ENCODE measurements at regions of chr15 and their contacts with region 1.

Region 1: DNA sequence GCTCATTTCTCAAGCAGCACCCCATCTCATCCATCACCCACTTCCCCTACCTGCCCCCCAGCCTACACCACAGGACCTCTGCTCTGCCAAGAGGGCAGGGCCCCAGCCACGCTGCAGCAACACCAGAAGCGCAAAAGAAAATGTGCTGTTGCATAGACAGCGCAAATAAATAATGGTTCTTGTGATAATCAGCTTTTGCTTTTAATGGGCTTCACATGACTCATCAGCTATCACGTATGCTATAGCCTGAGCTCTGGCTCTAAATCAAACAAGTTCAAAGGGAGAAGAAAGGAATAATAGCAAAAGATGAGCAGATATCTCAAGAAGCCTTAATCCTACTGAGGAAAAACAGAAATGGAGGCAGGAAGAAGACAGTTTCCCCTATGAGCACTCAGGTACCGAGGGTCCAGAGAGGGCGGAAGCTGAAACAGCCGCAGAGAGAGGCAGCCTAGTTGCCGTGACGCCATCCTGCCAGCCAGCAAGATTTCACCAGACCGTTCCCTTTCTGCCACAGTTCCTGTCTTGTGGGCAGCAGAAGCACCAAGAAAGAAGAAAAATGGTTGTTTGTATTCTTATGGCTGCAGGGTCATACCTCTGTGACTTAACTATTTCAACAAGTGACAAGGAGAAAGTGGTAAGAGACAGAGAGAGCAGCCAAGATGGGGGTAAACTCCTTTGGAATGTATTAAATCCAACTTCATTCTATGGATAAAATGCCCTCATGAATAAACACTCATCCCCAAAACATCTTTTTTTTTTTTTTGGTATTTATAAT is 22.0 kb downstream of the RAB27A start:
- DNase-seq: peak; percentile 77 to 89 (median 81)
- H3K4me3 ChIP-seq: peak overlapping the region in 1 of 2 donors; percentile 30
- H3K4me3 Mint-ChIP-seq: peak overlapping the region; percentile 69 to 85 (median 79)
- H3K27ac ChIP-seq: peak overlapping the region; percentile 69
- H3K27ac Mint-ChIP-seq: peak overlapping the region; percentile 90 to 98 (median 97)
- H3K4me1 ChIP-seq: peaks cover 69% of the 10 kb centered on the region
- H3K4me1 Mint-ChIP-seq: peaks cover 46 to 80% (median 62%) of the 10 kb centered on the region in 4 donors
- H3K27me3 ChIP-seq: no peaks in the 10 kb centered on the region
- H3K27me3 Mint-ChIP-seq: no peaks in the 10 kb centered on the region

Region 2: DNA sequence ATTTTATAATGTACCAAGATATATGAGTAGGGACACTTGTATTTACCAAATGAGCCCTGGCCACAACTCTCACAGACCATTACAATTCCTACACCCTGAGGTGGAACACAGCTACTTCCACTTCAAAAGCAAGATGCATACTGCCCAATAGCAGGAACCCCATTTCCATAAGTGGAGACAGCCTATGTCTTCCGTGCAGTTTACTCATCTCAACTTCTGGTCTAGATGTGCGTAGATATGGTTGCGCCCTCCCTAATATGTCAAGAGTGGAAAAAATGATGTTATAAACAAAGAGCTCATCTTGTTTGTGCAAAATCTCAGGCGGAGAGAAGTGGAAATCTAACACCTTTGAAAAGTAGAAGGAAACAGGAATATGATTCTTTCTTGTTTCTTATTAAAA is 22.5 kb before region 1 on chr15:
- CTCF ChIA-PET with region 1: no interaction called
- POLR2A ChIA-PET with region 1: interaction called, 47 read pairs
- intact Hi-C with region 1: no loop called
- DNase-seq: no peak
- H3K4me3 ChIP-seq: no peak overlapping the region
- H3K4me3 Mint-ChIP-seq: peak overlapping the region in 1 of 8 donors; percentile 13
- H3K27ac ChIP-seq: no peak overlapping the region
- H3K27ac Mint-ChIP-seq: peak overlapping the region in 3 of 7 donors; percentile 30 to 47 (median 38)
- H3K4me1 ChIP-seq: peaks cover 38% of the 10 kb centered on the region
- H3K4me1 Mint-ChIP-seq: peaks cover 34 to 72% (median 46%) of the 10 kb centered on the region in 4 donors
- H3K27me3 ChIP-seq: no peaks in the 10 kb centered on the region
- H3K27me3 Mint-ChIP-seq: no peaks in the 10 kb centered on the region

Region 3: GRCh38 chr15:55255714-55256113 is 11.9 kb before region 1 on chr15:
- CTCF ChIA-PET with region 1: interaction called, 11 read pairs
- POLR2A ChIA-PET with region 1: interaction called, 47 read pairs
- intact Hi-C with region 1: loop called (anchors 1 kb)
- DNase-seq: peak in 3 of 5 donors; percentile 24 to 30 (median 26)
- H3K4me3 ChIP-seq: peak overlapping the region; percentile 8 to 32
- H3K4me3 Mint-ChIP-seq: peak overlapping the region; percentile 80 to 93 (median 83)
- H3K27ac ChIP-seq: peak overlapping the region; percentile 64
- H3K27ac Mint-ChIP-seq: peak overlapping the region; percentile 80 to 97 (median 93)
- H3K4me1 ChIP-seq: peaks cover 66% of the 10 kb centered on the region
- H3K4me1 Mint-ChIP-seq: peaks cover 52 to 78% (median 66%) of the 10 kb centered on the region in 4 donors
- H3K27me3 ChIP-seq: no peaks in the 10 kb centered on the region
- H3K27me3 Mint-ChIP-seq: no peaks in the 10 kb centered on the region

Region 4: GRCh38 chr15:55290528-55291057 is 23.0 kb after region 1 on chr15:
- CTCF ChIA-PET with region 1: interaction called, 14 read pairs
- POLR2A ChIA-PET with region 1: interaction called, 201 read pairs
- intact Hi-C with region 1: loop called (anchors 1 kb)
- DNase-seq: peak; percentile 80 to 84 (median 82)
- H3K4me3 ChIP-seq: peak overlapping the region; percentile 66 to 85
- H3K4me3 Mint-ChIP-seq: peak overlapping the region; percentile 88 to 96 (median 93)
- H3K27ac ChIP-seq: peak overlapping the region; percentile 96
- H3K27ac Mint-ChIP-seq: peak overlapping the region; percentile 87 to 96 (median 95)
- H3K4me1 ChIP-seq: peaks cover 36% of the 10 kb centered on the region
- H3K4me1 Mint-ChIP-seq: peaks cover 26 to 49% (median 31%) of the 10 kb centered on the region in 4 donors
- H3K27me3 ChIP-seq: no peaks in the 10 kb centered on the region
- H3K27me3 Mint-ChIP-seq: no peaks in the 10 kb centered on the region

Region 5: GRCh38 chr15:55434989-55435825 is 167.6 kb after region 1 on chr15:
- CTCF ChIA-PET with region 1: interaction called, 10 read pairs
- POLR2A ChIA-PET with region 1: no interaction called
- intact Hi-C with region 1: no loop called
- DNase-seq: peak in 4 of 5 donors; percentile 23 to 36 (median 30)
- H3K4me3 ChIP-seq: no peak overlapping the region
- H3K4me3 Mint-ChIP-seq: no peak overlapping the region
- H3K27ac ChIP-seq: no peak overlapping the region
- H3K27ac Mint-ChIP-seq: no peak overlapping the region
- H3K4me1 ChIP-seq: peaks cover 4% of the 10 kb centered on the region
- H3K4me1 Mint-ChIP-seq: peaks cover 3 to 7% (median 5%) of the 10 kb centered on the region in 4 donors
- H3K27me3 ChIP-seq: no peaks in the 10 kb centered on the region
- H3K27me3 Mint-ChIP-seq: peaks cover 0 to 1% of the 10 kb centered on the region in 2 donors